Posterior vena cava (tissue), 2 donors: ENCODE measurements at regions of chr1 and their contacts with region 1.

Region 1: GRCh38 chr1:182391362-182392044 is at the start of gene GLUL:
- DNase-seq: peak; percentile 98
- total RNA-seq, gene GLUL: 482 to 580 TPM

Region 2: DNA sequence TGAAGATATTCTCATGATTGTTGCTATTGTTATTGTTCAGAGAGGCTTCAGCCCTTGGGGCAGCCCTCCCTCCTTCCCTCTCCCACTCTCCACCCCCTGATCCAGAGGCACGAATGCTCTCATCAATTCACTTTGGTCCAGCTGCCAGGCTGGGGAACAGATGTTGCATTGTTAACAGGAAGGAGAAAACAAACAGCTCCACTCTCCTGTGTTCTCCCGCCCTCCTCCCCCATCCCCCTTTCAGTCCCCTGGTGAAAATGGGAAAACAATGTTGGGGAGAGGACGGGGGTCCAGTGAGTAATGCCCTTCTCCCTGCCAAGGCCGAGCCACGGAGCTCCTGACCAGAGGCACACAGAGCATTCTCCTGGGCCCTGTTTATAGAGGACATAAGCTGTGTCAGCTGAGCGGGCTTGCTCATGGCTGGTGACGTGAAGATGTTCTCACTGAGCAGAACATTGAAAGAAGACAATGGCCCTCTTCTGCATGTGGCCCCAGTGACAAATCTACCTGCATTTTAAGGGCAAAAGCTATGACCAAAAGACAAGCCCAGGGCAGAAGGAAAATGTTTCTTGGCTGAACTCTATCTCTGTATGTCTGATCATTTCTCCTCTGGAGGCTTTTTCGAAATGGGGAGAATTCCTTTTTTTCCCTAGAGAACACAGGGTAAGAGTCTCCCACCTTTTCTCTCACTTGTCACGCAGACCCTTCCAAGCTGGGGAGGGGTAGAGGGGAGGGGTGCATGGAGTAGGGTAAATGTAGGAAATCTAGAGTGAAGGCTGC is 111.6 kb before region 1 on chr1:
- intact Hi-C with region 1: loop called in 1 of 2 experiments (anchors 10 kb)
- DNase-seq: no peak

Region 3: GRCh38 chr1:182301467-182302198 is 89.9 kb before region 1 on chr1:
- intact Hi-C with region 1: loop called in 1 of 2 experiments (anchors 10 kb)
- DNase-seq: no peak